Dendritic cell treated with granulocyte-macrophage colony-stimulating factor and Interleukin-4, amounts not matched to agents 40 ng/mL and 50 ng/mL, for 4 days (primary cell): ENCODE measurements at regions of chr4 and their contacts with region 1.

Region 1: DNA sequence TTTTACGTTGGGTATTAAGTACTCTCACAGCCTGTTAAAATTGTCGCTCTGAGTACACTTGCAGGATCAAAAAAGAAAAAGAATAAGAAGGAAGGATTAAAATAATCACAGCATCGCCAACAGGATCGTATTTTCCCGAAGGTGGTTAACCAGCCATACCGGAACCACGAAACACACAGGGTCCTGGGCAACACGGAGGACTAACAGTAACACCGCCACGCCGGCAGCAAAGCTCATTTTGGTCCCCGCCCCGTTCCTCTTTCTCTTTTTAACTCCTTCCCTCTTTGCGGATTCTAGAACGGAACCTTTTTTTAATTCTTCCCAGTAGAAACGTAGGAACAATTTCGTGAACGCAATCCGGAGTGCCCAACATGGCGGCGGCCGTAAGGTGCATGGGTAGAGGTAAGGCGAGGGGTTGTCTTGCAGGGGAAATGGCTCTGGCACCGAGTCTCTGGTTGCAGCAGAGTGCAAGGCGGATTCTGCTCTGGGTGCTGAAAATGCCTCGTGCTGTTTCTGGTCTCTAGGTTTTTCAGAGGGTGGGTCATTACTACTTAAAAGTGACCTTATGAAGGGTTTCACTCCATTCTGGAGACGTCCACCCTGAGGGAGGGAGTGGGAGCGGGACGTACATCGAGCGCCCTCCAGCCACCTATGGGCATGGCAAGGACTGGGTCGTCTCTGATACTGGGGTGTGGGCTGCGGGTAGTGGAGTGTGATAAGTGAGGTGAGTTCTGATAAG is at the start of gene MRPL1:
- H3K4me3 Mint-ChIP-seq: peak within 1 kb of the TSS; percentile 97
- H3K27ac Mint-ChIP-seq: peak within 1 kb of the TSS; percentile 98
- H3K4me1 Mint-ChIP-seq: peaks cover 17% of the 10 kb centered on the region
- H3K27me3 Mint-ChIP-seq: no peaks in the 10 kb centered on the region

Region 2: DNA sequence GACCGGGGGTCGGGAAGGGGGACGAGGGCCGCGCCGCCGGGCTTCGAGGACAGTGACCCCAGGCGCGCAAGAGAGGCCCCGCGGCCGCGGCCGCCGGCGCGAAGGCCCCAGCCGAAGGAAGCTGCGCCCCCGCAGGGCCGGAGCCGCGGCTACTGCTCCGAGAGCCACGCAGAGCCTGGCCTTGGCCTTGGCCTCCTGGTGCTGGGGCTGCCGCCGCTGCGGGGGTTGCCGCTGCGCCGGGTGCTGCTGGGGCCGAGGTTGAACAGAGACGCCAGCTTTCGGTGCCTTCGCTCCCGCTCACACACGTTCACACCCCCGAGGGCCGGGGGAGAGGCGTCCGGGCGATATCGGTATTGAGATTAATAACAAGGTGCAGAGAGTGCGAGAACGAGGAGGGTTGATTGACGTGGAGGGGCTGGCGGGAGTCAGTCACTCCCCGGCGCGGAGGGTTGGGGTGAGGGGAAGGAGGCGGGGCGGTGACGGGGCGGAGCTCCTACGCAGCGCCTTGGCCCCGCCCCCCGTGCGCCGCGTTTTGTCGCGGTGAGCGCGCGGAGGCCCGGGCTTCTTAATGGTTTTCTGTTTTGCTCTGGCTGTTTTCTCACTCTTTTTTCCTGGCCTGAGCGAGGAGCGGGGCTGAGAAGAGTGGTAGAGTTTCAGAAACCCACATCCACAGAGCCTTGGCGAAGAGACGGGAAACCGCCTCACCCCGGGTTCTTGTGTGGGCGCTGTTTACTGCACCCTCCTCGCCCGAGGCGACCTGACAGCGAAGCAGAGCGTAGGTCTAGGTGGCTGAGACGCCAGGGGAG is 42.6 kb before region 1 on chr4:
- intact Hi-C with region 1: loop called (anchors 1 kb)
- H3K4me3 Mint-ChIP-seq: peak overlapping the region; percentile 99
- H3K27ac Mint-ChIP-seq: peak overlapping the region; percentile 97
- H3K4me1 Mint-ChIP-seq: peaks cover 43% of the 10 kb centered on the region
- H3K27me3 Mint-ChIP-seq: no peaks in the 10 kb centered on the region

Region 3: DNA sequence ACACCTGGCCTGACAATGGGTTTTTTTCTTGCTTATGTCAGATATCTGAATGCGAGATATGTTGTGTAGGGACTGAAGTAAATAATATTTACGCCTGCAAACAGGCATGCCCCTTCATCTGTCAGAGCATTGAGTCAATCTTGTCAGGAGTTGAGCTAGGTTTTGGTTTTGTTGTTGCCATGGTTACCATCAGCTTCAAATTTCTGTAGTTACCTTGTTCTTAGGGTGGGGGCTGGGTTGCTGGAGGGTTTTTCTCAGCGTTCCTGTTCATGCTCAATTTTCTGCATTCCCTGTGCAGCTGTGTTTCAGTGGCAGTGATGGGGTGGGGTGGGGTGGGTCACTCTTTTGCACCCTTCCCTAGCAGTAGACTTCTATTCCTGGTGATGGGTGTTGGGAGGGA is 14.5 kb after region 1 on chr4:
- intact Hi-C with region 1: no loop called
- H3K4me3 Mint-ChIP-seq: no peak overlapping the region
- H3K27ac Mint-ChIP-seq: no peak overlapping the region
- H3K4me1 Mint-ChIP-seq: no peaks in the 10 kb centered on the region
- H3K27me3 Mint-ChIP-seq: no peaks in the 10 kb centered on the region